ENCODE measurements at regions of chr10 and their contacts with region 1.

Region 1: DNA sequence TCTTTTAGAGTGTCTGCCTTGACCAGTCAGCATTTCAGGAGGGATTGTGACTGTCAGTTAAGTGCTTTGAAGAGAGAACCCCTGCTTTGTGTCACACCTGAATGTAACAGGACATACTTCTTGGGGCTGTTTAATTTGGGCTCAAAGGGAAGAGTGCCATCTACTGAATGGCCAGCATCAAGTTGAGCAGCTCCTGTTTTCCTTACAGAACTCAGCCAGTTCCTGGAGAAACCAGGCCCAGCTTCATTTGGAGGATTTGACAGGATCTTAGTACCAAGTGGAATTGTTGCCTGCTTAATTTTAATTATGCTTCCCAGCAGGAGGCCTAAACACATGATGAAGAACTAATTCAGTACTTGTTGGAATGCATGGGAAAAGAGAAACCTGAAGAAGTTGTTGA is 8.3 kb downstream of the ADD3 start:
- DNase-seq: no peak
- H3K4me3 ChIP-seq: no peak overlapping the region
- H3K27ac ChIP-seq: no peak overlapping the region
- H3K4me1 ChIP-seq: peaks cover 0 to 15% (median 9%) of the 10 kb centered on the region in 4 experiments; a peak in 5 of 7 replicates
- H3K27me3 ChIP-seq: no peaks in the 10 kb centered on the region
- CTCF ChIP-seq: peak in 2 of 3 experiments; percentile 46 to 48; a peak in 3 of 4 replicates
- EP300 ChIP-seq: no peak
- POLR2A ChIP-seq: no peak
- RAD21 ChIP-seq: peak; percentile 61 to 71

Region 2: DNA sequence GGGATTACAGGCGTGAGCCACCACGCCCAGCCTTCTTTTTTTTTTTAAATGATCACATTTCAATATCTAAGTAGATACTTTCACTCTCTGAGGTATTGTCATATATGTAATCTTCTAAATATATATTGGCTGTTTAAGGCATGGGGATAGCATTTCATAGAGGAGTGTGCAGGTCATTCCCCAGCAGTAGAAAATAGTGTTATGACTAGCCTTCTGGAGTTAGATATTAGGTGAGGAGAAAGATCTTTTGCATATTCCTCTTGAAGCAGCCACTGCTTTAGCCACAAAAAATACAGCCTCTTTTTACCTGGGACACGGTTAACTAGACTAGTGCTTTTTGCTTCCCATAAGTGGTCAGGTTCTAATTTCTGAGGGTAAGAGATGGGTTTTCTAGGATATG is 20.6 kb after region 1 on chr10:
- CTCF ChIA-PET with region 1: interaction called, 13 read pairs
- POLR2A ChIA-PET with region 1: no interaction called
- DNase-seq: no peak
- H3K4me3 ChIP-seq: no peak overlapping the region
- H3K27ac ChIP-seq: no peak overlapping the region
- H3K4me1 ChIP-seq: peaks cover 0 to 3% (median 0%) of the 10 kb centered on the region in 4 experiments; a peak in 2 of 7 replicates
- H3K27me3 ChIP-seq: no peaks in the 10 kb centered on the region
- CTCF ChIP-seq: no peak
- EP300 ChIP-seq: no peak
- POLR2A ChIP-seq: no peak
- RAD21 ChIP-seq: no peak